AG04450 (cell line): ENCODE measurements at regions of chr11 and their contacts with region 1.

Region 1: GRCh38 chr11:73965076-73965860 is 14.4 kb downstream of the DNAJB13 start:
- DNase-seq: no peak
- H3K4me3 ChIP-seq: no peak overlapping the region
- H3K27ac ChIP-seq: no peak overlapping the region
- H3K27me3 ChIP-seq: peaks cover 8% of the 10 kb centered on the region
- CTCF ChIP-seq: 0 out of 2 replicates have a peak, but pooled peaks have one; percentile 7

Region 2: GRCh38 chr11:73980001-73980961 is 15.0 kb after region 1 on chr11:
- CTCF ChIA-PET with region 1: interaction called, 10 read pairs
- POLR2A ChIA-PET with region 1: no interaction called
- DNase-seq: no peak
- H3K4me3 ChIP-seq: no peak overlapping the region
- H3K27ac ChIP-seq: no peak overlapping the region
- H3K27me3 ChIP-seq: no peaks in the 10 kb centered on the region
- CTCF ChIP-seq: no peak